Activated naive CD4-positive, alpha-beta T cell treated with anti-CD3 and anti-CD28 coated beads for 36 hours (primary cell): ENCODE measurements at regions of chr11 and their contacts with region 1.

Region 1: GRCh38 chr11:123741159-123742028 is at the start of gene ZNF202:
- DNase-seq: peak; percentile 94
- H3K4me3 Mint-ChIP-seq: peak within 1 kb of the TSS; percentile 98
- H3K27ac Mint-ChIP-seq: peak within 1 kb of the TSS; percentile 92
- H3K4me1 Mint-ChIP-seq: peaks cover 40% of the 10 kb centered on the region
- H3K27me3 Mint-ChIP-seq: no peaks in the 10 kb centered on the region
- total RNA-seq, gene ZNF202: 5.9 to 6.4 TPM

Region 2: GRCh38 chr11:124114942-124115781 is 373.8 kb after region 1 on chr11 and contains the start of gene VWA5A:
- CTCF ChIA-PET with region 1: no interaction called
- intact Hi-C with region 1: loop called (anchors 1 kb)
- DNase-seq: peak; percentile 93
- H3K4me3 Mint-ChIP-seq: peak within 1 kb of the TSS; percentile 82
- H3K27ac Mint-ChIP-seq: peak within 1 kb of the TSS; percentile 56
- H3K4me1 Mint-ChIP-seq: peaks cover 9% of the 10 kb centered on the region
- H3K27me3 Mint-ChIP-seq: no peaks in the 10 kb centered on the region
- total RNA-seq, gene VWA5A: 9.7 to 11.4 TPM

Region 3: DNA sequence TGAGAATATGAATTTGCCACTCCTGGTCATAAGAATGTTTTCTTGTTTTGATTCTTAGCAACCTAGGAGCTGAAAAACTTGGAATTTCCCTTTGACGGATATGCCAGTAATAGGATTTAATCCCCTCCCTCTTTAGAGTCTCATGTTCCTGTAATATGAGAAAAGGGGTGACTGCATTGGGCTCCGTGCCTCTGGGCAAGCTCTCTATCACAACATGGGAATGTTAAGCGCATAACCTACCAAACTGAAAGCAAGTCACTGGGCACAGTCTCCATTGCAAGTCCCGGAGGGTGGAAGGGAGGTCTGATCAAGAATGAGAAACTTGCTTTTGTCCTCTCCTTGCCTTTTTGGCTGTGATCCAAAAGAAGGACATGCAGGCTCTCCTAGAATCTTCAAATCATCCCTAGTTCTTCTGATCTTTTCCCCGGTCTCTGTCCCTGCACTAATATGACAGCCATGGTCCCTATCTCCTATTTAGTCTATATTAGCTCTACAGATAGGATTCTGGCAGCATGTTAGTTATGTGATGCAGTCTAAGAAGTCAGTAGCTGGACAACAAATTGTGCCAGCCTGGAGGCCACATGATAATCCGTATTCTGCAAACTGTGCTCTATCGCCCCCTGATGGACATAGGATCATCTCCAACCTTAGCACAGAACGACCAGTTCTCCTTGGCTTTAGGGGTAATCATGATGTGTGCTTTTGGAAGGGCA is 453.5 kb after region 1 on chr11:
- CTCF ChIA-PET with region 1: no interaction called
- intact Hi-C with region 1: loop called (anchors 5 kb)
- DNase-seq: peak; percentile 71
- H3K4me3 Mint-ChIP-seq: no peak overlapping the region
- H3K27ac Mint-ChIP-seq: no peak overlapping the region
- H3K4me1 Mint-ChIP-seq: no peaks in the 10 kb centered on the region
- H3K27me3 Mint-ChIP-seq: peaks cover 17% of the 10 kb centered on the region